ENCODE measurements at regions of chr2 and their contacts with region 1.

Region 1: GRCh38 chr2:10434886-10435819 is 13.0 kb downstream of the ODC1 start:
- DNase-seq: no peak
- ATAC-seq: peak; percentile 86
- H3K4me3 ChIP-seq: no peak overlapping the region
- H3K27ac ChIP-seq: no peak overlapping the region
- H3K4me1 ChIP-seq: peaks cover 3% of the 10 kb centered on the region; the same call in 1 of the 2 replicates
- H3K27me3 ChIP-seq: no peaks in the 10 kb centered on the region
- CTCF ChIP-seq: peak; percentile 96 to 99 (median 98)
- EP300 ChIP-seq: no peak
- POLR2A ChIP-seq: no peak
- RAD21 ChIP-seq: peak; percentile 98

Region 2: DNA sequence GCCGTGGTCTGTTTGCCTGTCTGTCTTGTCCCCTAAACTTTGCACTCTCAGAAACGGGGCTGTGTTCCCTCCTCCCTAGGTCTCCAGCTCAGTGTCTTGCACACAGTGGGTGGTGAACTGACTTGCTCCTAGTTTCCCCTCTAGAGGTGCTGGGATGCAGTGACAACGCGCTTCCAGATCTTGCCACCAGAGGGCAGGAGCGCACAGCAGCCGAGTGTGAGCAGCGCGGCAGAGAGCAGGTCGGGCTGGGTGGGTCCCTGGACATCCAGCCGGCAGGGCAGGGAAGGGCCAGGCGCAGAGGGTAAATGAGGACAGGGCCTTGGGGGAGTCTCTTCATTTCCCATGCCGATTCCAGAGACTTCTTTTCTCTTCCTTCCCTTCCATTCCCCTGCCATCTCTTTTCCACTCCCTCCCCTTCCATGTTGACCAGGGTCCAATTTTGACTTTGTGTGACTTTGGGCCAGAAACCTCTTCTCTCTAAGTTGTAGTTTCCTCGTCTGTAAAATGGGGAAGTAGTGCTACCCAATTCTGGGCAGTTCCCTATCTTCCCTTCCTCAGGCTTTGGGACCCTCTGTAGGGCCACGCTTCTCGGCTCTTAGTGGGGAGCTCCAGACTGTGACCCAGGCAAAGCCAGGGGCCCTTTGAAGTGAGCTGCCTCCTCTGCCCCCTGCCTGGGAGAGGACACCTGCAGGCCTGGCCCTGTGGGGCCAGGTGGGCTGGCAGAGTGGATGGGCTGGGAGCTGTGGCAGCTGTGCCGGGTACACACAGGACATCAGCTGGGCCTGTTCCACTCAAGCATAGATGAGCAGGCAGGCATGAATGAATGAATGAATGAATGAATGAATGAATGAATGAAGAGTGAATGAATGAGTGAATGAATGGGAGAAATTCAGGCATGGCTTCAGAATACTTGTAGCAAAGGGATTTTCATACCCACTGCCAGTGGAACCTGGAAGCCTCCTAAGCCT is 635.2 kb before region 1 on chr2:
- CTCF ChIA-PET with region 1: interaction called, 10 read pairs
- POLR2A ChIA-PET with region 1: no interaction called
- RAD21 ChIA-PET with region 1: interaction called, 4 read pairs
- SMC1A ChIA-PET with region 1: no interaction called
- in situ Hi-C with region 1: no loop called
- intact Hi-C with region 1: no loop called
- DNase-seq: peak; percentile 47
- ATAC-seq: peak; percentile 93
- H3K4me3 ChIP-seq: no peak overlapping the region; the same call in 1 of the 2 replicates
- H3K27ac ChIP-seq: no peak overlapping the region
- H3K4me1 ChIP-seq: peaks cover 11% of the 10 kb centered on the region
- H3K27me3 ChIP-seq: no peaks in the 10 kb centered on the region; a peak in 1 of 4 replicates
- CTCF ChIP-seq: peak; percentile 97 to 100 (median 98)
- EP300 ChIP-seq: no peak
- POLR2A ChIP-seq: no peak
- RAD21 ChIP-seq: peak; percentile 84

Region 3: GRCh38 chr2:10072656-10073480 is 362.3 kb before region 1 on chr2:
- CTCF ChIA-PET with region 1: interaction called, 109 read pairs
- POLR2A ChIA-PET with region 1: interaction called, 4 read pairs
- RAD21 ChIA-PET with region 1: interaction called, 86 read pairs
- SMC1A ChIA-PET with region 1: interaction called, 38 read pairs
- in situ Hi-C with region 1: loop called (anchors 5 kb)
- intact Hi-C with region 1: loop called (anchors 1 kb)
- DNase-seq: no peak
- ATAC-seq: peak; percentile 96
- H3K4me3 ChIP-seq: no peak overlapping the region
- H3K27ac ChIP-seq: no peak overlapping the region
- H3K4me1 ChIP-seq: peaks cover 21% of the 10 kb centered on the region
- H3K27me3 ChIP-seq: no peaks in the 10 kb centered on the region
- CTCF ChIP-seq: peak; percentile 84 to 94 (median 86); a peak in 5 of 6 replicates
- EP300 ChIP-seq: no peak
- POLR2A ChIP-seq: no peak
- RAD21 ChIP-seq: peak; percentile 92

Region 4: DNA sequence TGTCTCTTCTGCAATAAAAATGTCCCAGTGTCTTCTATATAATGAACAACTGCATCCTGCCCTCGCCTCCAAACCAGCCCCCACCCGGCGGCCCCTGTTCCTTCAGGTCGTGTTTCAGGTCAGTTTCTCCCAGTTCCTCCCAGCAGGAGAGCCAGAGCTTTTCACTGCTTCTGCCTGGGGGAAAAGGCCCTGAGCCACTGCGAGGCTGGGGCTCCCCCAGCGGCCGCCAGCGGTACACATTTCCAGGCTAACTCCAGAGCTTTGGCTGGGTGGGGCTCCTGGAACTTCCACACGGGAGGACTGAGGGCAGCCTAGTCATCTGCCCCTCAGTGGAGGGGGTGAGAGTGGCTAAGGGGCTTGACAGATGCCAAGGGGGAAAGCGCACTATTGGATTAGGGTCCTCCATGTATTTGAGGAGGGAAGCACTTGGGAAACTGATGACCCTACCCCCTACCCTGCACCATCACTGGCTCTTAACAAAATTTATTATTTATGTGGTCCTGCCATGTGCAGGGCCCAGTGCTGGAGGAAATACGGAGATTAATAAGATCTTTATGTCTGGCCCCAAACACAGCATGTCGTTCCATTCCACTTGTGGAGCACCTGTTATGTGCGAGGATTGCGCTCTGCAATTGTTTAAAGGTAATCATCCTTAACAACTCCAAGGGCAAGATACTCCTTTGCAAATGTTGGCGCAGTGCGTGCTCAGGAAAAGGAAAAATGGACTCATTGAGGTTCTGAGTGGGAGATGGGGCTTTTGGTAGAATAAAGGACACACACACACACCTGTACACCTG is 337.6 kb before region 1 on chr2:
- CTCF ChIA-PET with region 1: interaction called, 13 read pairs
- POLR2A ChIA-PET with region 1: no interaction called
- RAD21 ChIA-PET with region 1: interaction called, 11 read pairs
- SMC1A ChIA-PET with region 1: interaction called, 3 read pairs
- in situ Hi-C with region 1: no loop called
- intact Hi-C with region 1: no loop called
- DNase-seq: no peak
- ATAC-seq: peak; percentile 96
- H3K4me3 ChIP-seq: no peak overlapping the region
- H3K27ac ChIP-seq: no peak overlapping the region
- H3K4me1 ChIP-seq: peaks cover 2% of the 10 kb centered on the region; the same call in 1 of the 2 replicates
- H3K27me3 ChIP-seq: no peaks in the 10 kb centered on the region
- CTCF ChIP-seq: peak; percentile 91 to 99 (median 92)
- EP300 ChIP-seq: no peak
- POLR2A ChIP-seq: no peak
- RAD21 ChIP-seq: peak; percentile 80

Region 5: DNA sequence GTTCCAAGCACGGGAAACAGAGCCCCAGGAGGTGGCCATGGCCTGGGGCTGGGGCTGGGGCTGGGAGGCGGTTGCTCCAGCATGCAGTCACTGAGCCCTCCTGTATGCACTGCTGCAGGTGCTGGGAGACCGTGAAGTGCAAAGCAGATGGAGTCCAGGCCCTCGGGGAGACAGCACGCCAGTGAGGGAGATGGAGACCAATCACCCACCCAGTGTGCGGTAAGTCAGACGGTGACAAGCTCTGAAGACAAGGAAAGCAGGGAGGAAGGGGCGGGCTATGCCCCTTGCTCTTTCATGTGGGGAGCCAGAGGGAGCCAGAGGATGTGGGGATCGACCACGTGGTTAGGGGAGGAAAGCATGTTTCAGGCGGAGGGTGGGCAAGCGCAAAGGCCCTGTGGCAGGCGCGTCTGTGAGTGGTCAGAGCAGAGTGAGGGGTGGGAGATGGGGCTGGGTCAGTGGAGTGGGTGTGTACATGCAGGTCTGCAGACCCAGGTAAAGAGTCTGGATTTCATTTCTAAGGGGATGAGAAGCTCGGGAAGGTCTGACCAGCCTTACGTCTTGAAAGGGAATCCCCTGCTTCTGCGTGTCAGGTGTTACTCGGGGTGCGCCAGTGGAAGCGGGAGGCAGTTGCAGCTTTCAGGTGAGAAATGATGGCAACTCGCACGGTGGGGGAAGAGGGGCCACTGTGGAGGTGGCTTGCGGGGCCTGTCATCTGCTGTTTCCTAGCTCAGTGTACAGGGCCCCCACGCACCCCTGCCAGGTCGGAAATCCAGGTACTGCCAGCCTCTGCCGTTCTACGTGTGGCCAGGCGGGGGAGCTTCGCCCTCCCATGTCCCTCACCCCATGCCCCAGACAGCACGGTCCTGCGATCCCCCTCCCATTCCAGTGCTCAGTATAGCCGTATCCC is 293.2 kb before region 1 on chr2:
- CTCF ChIA-PET with region 1: interaction called, 58 read pairs
- POLR2A ChIA-PET with region 1: no interaction called
- RAD21 ChIA-PET with region 1: interaction called, 26 read pairs
- SMC1A ChIA-PET with region 1: interaction called, 8 read pairs
- in situ Hi-C with region 1: no loop called
- intact Hi-C with region 1: loop called (anchors 1 kb)
- DNase-seq: no peak
- ATAC-seq: peak; percentile 88
- H3K4me3 ChIP-seq: no peak overlapping the region
- H3K27ac ChIP-seq: no peak overlapping the region
- H3K4me1 ChIP-seq: no peaks in the 10 kb centered on the region
- H3K27me3 ChIP-seq: no peaks in the 10 kb centered on the region
- CTCF ChIP-seq: peak; percentile 38 to 61 (median 49); a peak in 5 of 6 replicates
- EP300 ChIP-seq: no peak
- POLR2A ChIP-seq: no peak
- RAD21 ChIP-seq: peak; percentile 40

Region 6: GRCh38 chr2:10382354-10383061 is 52.6 kb before region 1 on chr2:
- CTCF ChIA-PET with region 1: interaction called, 10 read pairs
- POLR2A ChIA-PET with region 1: no interaction called
- RAD21 ChIA-PET with region 1: interaction called, 5 read pairs
- SMC1A ChIA-PET with region 1: no interaction called
- in situ Hi-C with region 1: no loop called
- intact Hi-C with region 1: no loop called
- DNase-seq: peak; percentile 60
- ATAC-seq: peak; percentile 84
- H3K4me3 ChIP-seq: no peak overlapping the region
- H3K27ac ChIP-seq: no peak overlapping the region
- H3K4me1 ChIP-seq: peaks cover 29% of the 10 kb centered on the region
- H3K27me3 ChIP-seq: no peaks in the 10 kb centered on the region
- CTCF ChIP-seq: no peak
- EP300 ChIP-seq: no peak
- POLR2A ChIP-seq: no peak
- RAD21 ChIP-seq: no peak

Region 7: GRCh38 chr2:10471956-10472355 is 36.8 kb after region 1 on chr2:
- CTCF ChIA-PET with region 1: no interaction called
- POLR2A ChIA-PET with region 1: no interaction called
- RAD21 ChIA-PET with region 1: no interaction called
- SMC1A ChIA-PET with region 1: no interaction called
- in situ Hi-C with region 1: no loop called
- intact Hi-C with region 1: no loop called
- DNase-seq: no peak
- ATAC-seq: no peak
- H3K4me3 ChIP-seq: no peak overlapping the region
- H3K27ac ChIP-seq: no peak overlapping the region
- H3K4me1 ChIP-seq: no peaks in the 10 kb centered on the region
- H3K27me3 ChIP-seq: no peaks in the 10 kb centered on the region; a peak in 1 of 4 replicates
- CTCF ChIP-seq: no peak
- EP300 ChIP-seq: no peak
- POLR2A ChIP-seq: no peak
- RAD21 ChIP-seq: no peak

Region 8: DNA sequence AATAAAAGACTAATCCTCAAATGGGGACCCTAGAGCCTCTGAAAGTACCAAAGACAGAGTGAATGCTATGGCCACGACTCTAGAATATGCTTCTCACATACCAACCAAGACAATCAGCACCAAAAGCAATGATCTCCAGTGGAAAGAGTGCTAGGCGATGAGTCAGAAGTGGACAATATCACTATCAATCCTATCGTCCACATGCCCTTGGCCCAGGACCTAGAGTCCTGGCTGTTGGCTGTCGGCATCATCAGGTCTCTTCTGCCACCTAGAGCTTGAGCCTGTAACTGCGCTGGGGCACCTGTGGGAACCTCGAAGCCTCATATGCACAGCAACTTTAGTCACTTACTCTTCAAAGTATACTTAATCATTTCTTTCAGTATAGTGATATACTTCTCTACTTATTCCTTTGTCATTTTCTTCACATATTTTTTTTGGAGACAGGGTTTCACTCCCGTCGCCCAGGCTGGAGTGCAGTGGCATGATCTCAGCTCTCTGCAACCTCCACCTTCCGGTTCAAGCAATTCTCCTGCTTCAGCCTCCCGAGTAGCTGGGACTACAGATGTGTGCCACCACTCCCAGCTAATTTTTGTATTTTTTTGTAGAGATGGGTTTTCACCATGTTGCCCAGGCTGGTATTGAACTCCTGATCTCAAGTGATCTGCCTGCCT is 224.9 kb after region 1 on chr2:
- CTCF ChIA-PET with region 1: interaction called, 15 read pairs
- POLR2A ChIA-PET with region 1: no interaction called
- RAD21 ChIA-PET with region 1: interaction called, 7 read pairs
- SMC1A ChIA-PET with region 1: interaction called, 5 read pairs
- in situ Hi-C with region 1: no loop called
- intact Hi-C with region 1: no loop called
- DNase-seq: no peak
- ATAC-seq: peak; percentile 69
- H3K4me3 ChIP-seq: no peak overlapping the region
- H3K27ac ChIP-seq: no peak overlapping the region
- H3K4me1 ChIP-seq: no peaks in the 10 kb centered on the region
- H3K27me3 ChIP-seq: no peaks in the 10 kb centered on the region
- CTCF ChIP-seq: peak; percentile 39 to 59 (median 48); a peak in 5 of 6 replicates
- EP300 ChIP-seq: no peak
- POLR2A ChIP-seq: no peak
- RAD21 ChIP-seq: peak; percentile 30; the same call in 1 of the 2 replicates

Measured in GM12878 (cell line).